A673 (cell line): ENCODE measurements at regions of chr20 and their contacts with region 1.

Region 1: GRCh38 chr20:50680412-50680908 is 10.9 kb downstream of the RIPOR3 start:
- DNase-seq: no peak
- H3K4me3 ChIP-seq: no peak overlapping the region
- H3K27ac ChIP-seq: peak overlapping the region; percentile 65
- H3K4me1 ChIP-seq: peaks cover 23% of the 10 kb centered on the region
- H3K27me3 ChIP-seq: no peaks in the 10 kb centered on the region
- CTCF ChIP-seq: no peak

Region 2: DNA sequence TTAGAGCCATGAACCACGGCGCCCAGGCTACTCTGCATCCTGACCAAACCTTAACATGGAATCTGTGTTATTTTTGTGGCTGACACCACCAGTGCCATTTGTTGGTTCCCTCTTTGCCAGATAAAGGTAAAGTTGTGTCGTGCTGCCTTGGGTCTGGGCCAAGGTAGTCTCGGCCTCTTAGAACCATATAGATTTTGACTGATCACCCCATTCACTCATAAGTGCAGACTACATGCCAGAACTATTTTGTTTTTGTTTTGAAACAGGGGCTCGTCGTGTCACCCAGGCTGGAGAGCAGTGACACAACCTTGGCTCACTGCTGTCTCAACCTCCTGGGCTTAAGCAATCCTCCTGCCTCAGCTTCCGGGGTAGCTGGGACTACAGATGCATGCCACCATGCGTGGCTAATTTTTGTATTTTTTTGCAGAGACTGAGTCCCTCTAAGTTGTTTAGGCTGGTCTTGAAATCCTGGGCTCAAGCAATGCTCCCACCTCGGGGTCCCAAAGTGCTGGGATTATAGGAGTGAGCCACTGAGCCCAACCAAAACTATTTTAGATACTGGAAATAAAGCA is 30.1 kb after region 1 on chr20:
- CTCF ChIA-PET with region 1: no interaction called
- POLR2A ChIA-PET with region 1: interaction called, 11 read pairs
- intact Hi-C with region 1: no loop called
- DNase-seq: no peak
- H3K4me3 ChIP-seq: no peak overlapping the region
- H3K27ac ChIP-seq: no peak overlapping the region
- H3K4me1 ChIP-seq: peaks cover 5% of the 10 kb centered on the region
- H3K27me3 ChIP-seq: no peaks in the 10 kb centered on the region
- CTCF ChIP-seq: no peak